ENCODE measurements at regions of chr2 and their contacts with region 1.

Region 1: GRCh38 chr2:8681786-8682692 is at the start of gene ID2:
- DNase-seq: peak; percentile 99
- ATAC-seq: peak; percentile 73
- H3K4me3 Mint-ChIP-seq: peak within 1 kb of the TSS; percentile 98
- H3K27ac Mint-ChIP-seq: peak within 1 kb of the TSS; percentile 97
- H3K4me1 Mint-ChIP-seq: peaks cover 34% of the 10 kb centered on the region
- H3K27me3 Mint-ChIP-seq: peaks cover 10% of the 10 kb centered on the region
- total RNA-seq, gene ID2: 171 to 213 TPM

Region 2: GRCh38 chr2:6909431-6910385 is 1772.3 kb before region 1 on chr2:
- CTCF ChIA-PET with region 1: no interaction called
- POLR2A ChIA-PET with region 1: no interaction called
- intact Hi-C with region 1: loop called in 1 of 2 experiments (anchors 5 kb)
- DNase-seq: peak; percentile 62
- ATAC-seq: peak; percentile 34
- H3K4me3 Mint-ChIP-seq: peak overlapping the region; percentile 75
- H3K27ac Mint-ChIP-seq: peak overlapping the region; percentile 99
- H3K4me1 Mint-ChIP-seq: peaks cover 90% of the 10 kb centered on the region
- H3K27me3 Mint-ChIP-seq: no peaks in the 10 kb centered on the region

Region 3: DNA sequence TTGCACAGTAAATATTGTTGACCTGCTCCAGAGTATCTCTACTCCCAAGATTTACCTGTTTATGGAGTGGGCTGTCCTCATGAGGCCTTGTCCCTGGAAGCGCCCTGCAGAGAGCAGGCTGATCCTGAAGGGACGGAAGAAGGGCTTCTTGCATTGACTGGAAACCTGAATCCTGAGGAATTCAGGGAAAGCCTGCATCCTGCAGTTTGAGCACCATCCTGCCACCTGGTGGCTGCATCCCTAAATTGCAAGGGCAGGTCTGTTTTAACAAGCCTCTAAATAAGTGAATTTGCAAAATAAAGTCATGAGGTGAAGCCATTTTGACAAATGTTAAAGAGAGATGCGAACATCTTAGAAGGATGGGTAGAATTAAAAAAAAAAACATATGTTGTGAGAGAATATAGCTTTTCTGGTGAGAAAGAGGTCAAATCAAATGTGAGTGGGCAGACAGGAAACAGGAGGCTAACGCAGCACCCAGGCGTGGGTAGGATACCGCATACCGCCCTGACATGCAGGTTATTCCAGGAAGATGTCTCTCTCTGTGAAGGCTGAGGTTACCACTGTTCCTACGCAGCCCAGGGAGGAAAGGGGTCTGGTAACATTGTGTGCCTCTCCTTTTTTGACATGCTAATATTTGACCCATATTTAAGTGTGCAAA is 1009.9 kb before region 1 on chr2:
- CTCF ChIA-PET with region 1: no interaction called
- POLR2A ChIA-PET with region 1: no interaction called
- intact Hi-C with region 1: loop called in 1 of 2 experiments (anchors 5 kb)
- DNase-seq: peak; percentile 80
- ATAC-seq: peak; percentile 76
- H3K4me3 Mint-ChIP-seq: peak overlapping the region; percentile 48
- H3K27ac Mint-ChIP-seq: peak overlapping the region; percentile 96
- H3K4me1 Mint-ChIP-seq: peaks cover 55% of the 10 kb centered on the region
- H3K27me3 Mint-ChIP-seq: no peaks in the 10 kb centered on the region

Region 4: GRCh38 chr2:7984693-7985353 is 697.2 kb before region 1 on chr2:
- CTCF ChIA-PET with region 1: no interaction called
- POLR2A ChIA-PET with region 1: no interaction called
- intact Hi-C with region 1: loop called in 1 of 2 experiments (anchors 5 kb)
- DNase-seq: no peak
- ATAC-seq: peak; percentile 96
- H3K4me3 Mint-ChIP-seq: peak overlapping the region; percentile 44
- H3K27ac Mint-ChIP-seq: peak overlapping the region; percentile 95
- H3K4me1 Mint-ChIP-seq: peaks cover 33% of the 10 kb centered on the region
- H3K27me3 Mint-ChIP-seq: no peaks in the 10 kb centered on the region

Region 5: GRCh38 chr2:8456151-8456845 is 225.7 kb before region 1 on chr2:
- CTCF ChIA-PET with region 1: interaction called, 4 read pairs
- POLR2A ChIA-PET with region 1: interaction called, 3 read pairs
- intact Hi-C with region 1: loop called in 1 of 2 experiments (anchors 1 kb)
- DNase-seq: peak; percentile 75
- ATAC-seq: peak; percentile 73
- H3K4me3 Mint-ChIP-seq: peak overlapping the region; percentile 69
- H3K27ac Mint-ChIP-seq: peak overlapping the region; percentile 89
- H3K4me1 Mint-ChIP-seq: peaks cover 42% of the 10 kb centered on the region
- H3K27me3 Mint-ChIP-seq: peaks cover 7% of the 10 kb centered on the region

Region 6: DNA sequence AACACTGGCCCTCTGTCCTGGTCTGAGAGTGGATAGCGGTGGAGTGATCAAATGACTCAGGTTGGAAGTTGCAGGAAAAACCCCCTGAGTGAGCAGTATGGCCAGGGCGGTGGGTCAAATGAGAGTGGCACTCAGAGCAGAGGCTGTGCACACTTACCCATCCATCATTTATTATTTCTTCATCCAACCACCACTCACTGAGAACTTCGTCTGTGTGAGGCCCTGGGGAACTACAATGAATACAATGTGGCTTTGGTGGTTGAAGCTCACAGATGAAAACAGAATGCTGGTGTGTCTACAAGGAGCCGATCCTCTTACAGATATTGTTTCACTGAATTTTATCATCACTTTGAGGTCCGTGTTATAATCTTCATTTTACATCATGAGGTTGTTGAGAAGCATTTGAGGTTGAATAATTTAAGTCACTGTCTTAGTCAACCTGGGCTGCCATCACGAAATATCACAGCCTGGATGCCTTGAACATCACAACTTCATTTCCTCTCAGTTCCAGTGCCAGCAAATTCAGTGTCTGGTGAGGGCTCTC is 73.6 kb before region 1 on chr2:
- CTCF ChIA-PET with region 1: no interaction called
- POLR2A ChIA-PET with region 1: interaction called, 7 read pairs
- intact Hi-C with region 1: loop called (anchors 1 kb)
- DNase-seq: peak; percentile 67
- ATAC-seq: peak; percentile 90
- H3K4me3 Mint-ChIP-seq: no peak overlapping the region
- H3K27ac Mint-ChIP-seq: peak overlapping the region; percentile 73
- H3K4me1 Mint-ChIP-seq: peaks cover 32% of the 10 kb centered on the region
- H3K27me3 Mint-ChIP-seq: peaks cover 2% of the 10 kb centered on the region

Measured in activated CD4-positive, alpha-beta T cell treated with anti-CD3 and anti-CD28 coated beads for 36 hours (primary cell).